Activated CD4-positive, alpha-beta T cell treated with anti-CD3 and anti-CD28 coated beads for 36 hours (primary cell): ENCODE measurements at regions of chrX and their contacts with region 1.

Region 1: DNA sequence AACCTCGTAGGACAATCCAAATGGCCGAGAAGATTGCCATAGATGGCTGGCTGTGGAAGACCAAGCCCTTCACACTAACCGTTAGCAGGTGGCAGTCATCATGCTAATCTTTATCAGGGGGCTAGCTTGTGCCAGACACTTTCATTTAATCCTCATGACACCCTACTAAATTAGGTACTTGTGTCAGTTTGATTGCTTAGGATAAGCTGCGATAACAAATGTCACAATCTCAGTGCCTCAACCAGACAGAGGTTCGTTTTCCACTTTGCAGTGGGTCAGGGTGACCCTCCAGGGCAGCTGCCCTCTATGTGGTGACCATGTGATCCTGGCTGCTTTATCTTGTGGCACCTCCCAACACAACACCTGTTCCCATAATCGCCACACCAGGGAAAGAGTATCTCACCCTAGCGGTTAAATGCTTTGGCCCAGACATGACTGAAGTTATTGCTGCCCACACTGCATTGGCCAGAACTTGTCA is 60.8 kb downstream of the REPS2 start:
- DNase-seq: peak; percentile 10
- ATAC-seq: no peak
- H3K4me3 Mint-ChIP-seq: no peak overlapping the region
- H3K27ac Mint-ChIP-seq: no peak overlapping the region
- H3K4me1 Mint-ChIP-seq: peaks cover 7% of the 10 kb centered on the region
- H3K27me3 Mint-ChIP-seq: peaks cover 3% of the 10 kb centered on the region

Region 2: DNA sequence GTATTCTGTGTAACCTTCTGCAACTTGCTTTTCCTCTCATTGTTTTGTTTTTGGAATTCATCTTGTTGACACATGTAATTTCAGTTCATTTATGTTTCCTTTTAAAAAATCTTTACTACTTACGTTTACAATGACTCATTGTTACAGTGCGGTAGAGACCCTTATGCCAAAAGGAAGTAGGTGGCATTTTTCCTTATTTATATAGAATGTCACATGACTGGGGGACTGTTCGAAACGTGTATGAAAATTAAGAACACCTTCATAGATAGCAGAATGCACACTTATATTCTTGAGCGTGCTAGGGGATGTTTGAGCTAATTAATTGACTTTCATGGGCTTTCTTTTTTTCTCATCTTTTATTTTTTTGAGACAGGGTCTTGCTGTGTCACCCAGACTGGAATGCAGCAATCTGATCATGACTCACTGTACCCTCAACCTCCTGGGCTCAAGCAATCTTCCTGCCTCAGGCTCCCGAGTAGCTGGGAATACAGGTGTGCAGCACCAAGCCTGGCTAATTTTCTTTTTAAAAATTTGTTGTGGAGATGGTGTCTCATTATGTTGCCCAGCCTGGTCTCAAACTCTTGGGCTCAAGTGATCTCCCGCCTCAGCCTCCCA is 53.5 kb before region 1 on chrX:
- CTCF ChIA-PET with region 1: no interaction called
- POLR2A ChIA-PET with region 1: no interaction called
- intact Hi-C with region 1: loop called in 1 of 2 experiments (anchors 2 kb)
- DNase-seq: no peak
- ATAC-seq: no peak
- H3K4me3 Mint-ChIP-seq: no peak overlapping the region
- H3K27ac Mint-ChIP-seq: no peak overlapping the region
- H3K4me1 Mint-ChIP-seq: no peaks in the 10 kb centered on the region
- H3K27me3 Mint-ChIP-seq: peaks cover 9% of the 10 kb centered on the region

Region 3: DNA sequence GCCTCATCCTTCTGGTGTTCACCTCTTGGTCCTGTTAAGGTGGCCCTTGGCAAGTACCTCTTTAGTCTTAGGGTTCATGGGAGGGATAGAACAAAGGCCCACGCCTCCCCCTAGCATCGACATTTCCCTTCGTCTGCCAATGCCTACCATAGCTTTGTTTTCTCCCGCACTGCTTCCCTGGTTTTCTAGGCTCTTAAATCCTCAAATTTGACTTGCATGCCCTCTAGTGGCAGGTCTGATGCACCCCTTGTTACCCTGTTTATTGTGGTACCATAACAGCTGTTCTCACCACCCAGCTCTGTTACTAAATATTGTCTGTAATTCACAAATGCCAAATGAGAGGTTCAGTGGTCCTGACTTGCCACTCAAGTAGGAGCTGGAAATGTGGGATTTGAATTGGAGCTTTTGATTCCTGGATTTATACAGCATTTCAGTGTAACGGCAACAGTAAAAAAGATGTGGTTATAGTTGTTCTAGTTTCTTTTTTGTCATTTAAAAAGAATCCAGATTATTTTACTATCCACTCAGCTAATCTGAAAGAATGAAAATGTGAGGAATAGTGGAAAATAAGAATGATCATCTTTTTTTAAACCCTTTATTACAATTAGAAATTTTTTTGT is 39.3 kb after region 1 on chrX:
- CTCF ChIA-PET with region 1: no interaction called
- POLR2A ChIA-PET with region 1: no interaction called
- intact Hi-C with region 1: loop called in 1 of 2 experiments (anchors 5 kb)
- DNase-seq: peak; percentile 60
- ATAC-seq: peak; percentile 57
- H3K4me3 Mint-ChIP-seq: no peak overlapping the region
- H3K27ac Mint-ChIP-seq: no peak overlapping the region
- H3K4me1 Mint-ChIP-seq: peaks cover 2% of the 10 kb centered on the region
- H3K27me3 Mint-ChIP-seq: no peaks in the 10 kb centered on the region